CD4-positive, alpha-beta T cell (primary cell): ENCODE measurements at regions of chr19 and their contacts with region 1.

Region 1: GRCh38 chr19:10251792-10252694 is at the start of gene MRPL4:
- DNase-seq: peak; percentile 87 to 99 (median 94)
- ATAC-seq: peak; percentile 97
- H3K4me3 ChIP-seq: peak within 1 kb of the TSS; percentile 86
- H3K4me3 Mint-ChIP-seq: peak within 1 kb of the TSS; percentile 100
- H3K27ac ChIP-seq: peak within 1 kb of the TSS; percentile 52 to 73
- H3K27ac Mint-ChIP-seq: peak within 1 kb of the TSS; percentile 98
- H3K4me1 ChIP-seq: peaks cover 27% of the 10 kb centered on the region
- H3K4me1 Mint-ChIP-seq: peaks cover 21% of the 10 kb centered on the region
- H3K27me3 ChIP-seq: no peaks in the 10 kb centered on the region
- H3K27me3 Mint-ChIP-seq: no peaks in the 10 kb centered on the region
- CTCF ChIP-seq: no peak
- total RNA-seq, gene MRPL4: 44.6 to 47.3 TPM

Region 2: DNA sequence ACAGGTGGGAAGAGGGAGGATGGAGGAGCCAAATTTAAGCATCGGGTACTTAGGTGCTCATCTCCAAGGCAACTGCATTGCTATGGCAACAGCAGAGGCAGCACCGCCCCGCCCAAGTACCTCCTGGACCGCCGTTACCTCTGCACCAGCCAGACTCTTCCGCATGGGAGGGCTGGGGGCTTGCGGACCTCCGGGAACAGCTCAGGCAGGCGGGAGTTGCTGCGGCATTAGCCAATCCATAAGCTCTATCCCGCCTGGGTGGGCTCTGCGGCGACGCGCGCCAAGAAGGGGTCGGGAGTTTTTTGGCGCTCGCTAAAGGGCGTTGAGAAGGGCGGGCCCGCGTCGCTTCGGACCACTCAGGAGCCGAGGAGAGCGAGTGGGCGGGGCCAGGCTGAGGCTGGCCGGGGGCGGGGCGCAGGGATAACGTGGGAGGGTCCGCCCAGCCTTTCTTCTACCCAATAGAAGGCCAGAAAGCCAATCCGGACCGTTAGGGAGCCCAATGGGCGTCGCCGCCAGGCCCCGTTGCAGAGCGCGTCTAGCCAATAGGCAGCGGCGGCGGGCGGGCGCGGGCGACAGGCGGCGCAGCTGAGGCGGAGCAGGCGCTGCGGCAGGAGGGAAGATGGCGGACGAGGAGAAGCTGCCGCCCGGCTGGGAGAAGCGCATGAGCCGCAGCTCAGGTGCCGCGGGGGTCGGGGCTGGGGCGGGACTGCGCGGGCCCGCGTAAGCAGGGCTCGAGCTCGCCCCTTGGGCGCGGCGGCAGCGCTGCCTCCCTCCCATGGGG is 417.1 kb before region 1 on chr19 and contains the start of gene PIN1:
- CTCF ChIA-PET with region 1: no interaction called
- POLR2A ChIA-PET with region 1: no interaction called
- intact Hi-C with region 1: loop called in 1 of 2 experiments (anchors 10 kb)
- DNase-seq: peak; percentile 98 to 100 (median 99)
- ATAC-seq: peak; percentile 94
- H3K4me3 ChIP-seq: peak within 1 kb of the TSS; percentile 81
- H3K4me3 Mint-ChIP-seq: peak within 1 kb of the TSS; percentile 96
- H3K27ac ChIP-seq: peak within 1 kb of the TSS; percentile 40 to 76
- H3K27ac Mint-ChIP-seq: peak within 1 kb of the TSS; percentile 94
- H3K4me1 ChIP-seq: peaks cover 33% of the 10 kb centered on the region
- H3K4me1 Mint-ChIP-seq: peaks cover 23% of the 10 kb centered on the region
- H3K27me3 ChIP-seq: no peaks in the 10 kb centered on the region
- H3K27me3 Mint-ChIP-seq: no peaks in the 10 kb centered on the region
- CTCF ChIP-seq: peak; percentile 43
- total RNA-seq, gene PIN1: 33.2 to 35.3 TPM

Region 3: GRCh38 chr19:10074153-10074552 is 177.9 kb before region 1 on chr19:
- CTCF ChIA-PET with region 1: no interaction called
- POLR2A ChIA-PET with region 1: no interaction called
- intact Hi-C with region 1: loop called in 1 of 2 experiments (anchors 2 kb)
- DNase-seq: peak in 10 of 14 experiments; percentile 13 to 77 (median 43)
- ATAC-seq: peak; percentile 71
- H3K4me3 ChIP-seq: no peak overlapping the region
- H3K4me3 Mint-ChIP-seq: no peak overlapping the region
- H3K27ac ChIP-seq: no peak overlapping the region
- H3K27ac Mint-ChIP-seq: no peak overlapping the region
- H3K4me1 ChIP-seq: no peaks in the 10 kb centered on the region
- H3K4me1 Mint-ChIP-seq: no peaks in the 10 kb centered on the region
- H3K27me3 ChIP-seq: no peaks in the 10 kb centered on the region
- H3K27me3 Mint-ChIP-seq: no peaks in the 10 kb centered on the region
- CTCF ChIP-seq: peak; percentile 44

Region 4: GRCh38 chr19:10106100-10106936 is 145.7 kb before region 1 on chr19 and contains the start of gene PPAN:
- CTCF ChIA-PET with region 1: interaction called, 3 read pairs
- POLR2A ChIA-PET with region 1: interaction called, 3 read pairs
- intact Hi-C with region 1: loop called in 1 of 2 experiments (anchors 5 kb)
- DNase-seq: peak; percentile 94 to 100 (median 98)
- ATAC-seq: peak; percentile 59
- H3K4me3 ChIP-seq: peak within 1 kb of the TSS; percentile 73
- H3K4me3 Mint-ChIP-seq: peak within 1 kb of the TSS; percentile 93
- H3K27ac ChIP-seq: peak within 1 kb of the TSS; percentile 94 to 98
- H3K27ac Mint-ChIP-seq: peak within 1 kb of the TSS; percentile 95
- H3K4me1 ChIP-seq: peaks cover 86% of the 10 kb centered on the region
- H3K4me1 Mint-ChIP-seq: peaks cover 58% of the 10 kb centered on the region
- H3K27me3 ChIP-seq: no peaks in the 10 kb centered on the region
- H3K27me3 Mint-ChIP-seq: no peaks in the 10 kb centered on the region
- CTCF ChIP-seq: no peak
- total RNA-seq, gene PPAN: 119 to 127 TPM

Region 5: GRCh38 chr19:10194500-10195289 is 57.3 kb before region 1 on chr19 and contains the start of gene DNMT1:
- CTCF ChIA-PET with region 1: interaction called, 7 read pairs
- POLR2A ChIA-PET with region 1: interaction called, 7 read pairs
- intact Hi-C with region 1: loop called in 1 of 2 experiments (anchors 2 kb)
- DNase-seq: peak; percentile 86 to 98 (median 96)
- ATAC-seq: peak; percentile 93
- H3K4me3 ChIP-seq: peak within 1 kb of the TSS; percentile 99
- H3K4me3 Mint-ChIP-seq: peak within 1 kb of the TSS; percentile 98
- H3K27ac ChIP-seq: peak within 1 kb of the TSS; percentile 77 to 80
- H3K27ac Mint-ChIP-seq: peak within 1 kb of the TSS; percentile 88
- H3K4me1 ChIP-seq: peaks cover 49% of the 10 kb centered on the region
- H3K4me1 Mint-ChIP-seq: peaks cover 32% of the 10 kb centered on the region
- H3K27me3 ChIP-seq: no peaks in the 10 kb centered on the region
- H3K27me3 Mint-ChIP-seq: no peaks in the 10 kb centered on the region
- CTCF ChIP-seq: no peak
- total RNA-seq, gene DNMT1: 159 to 160 TPM

Region 6: DNA sequence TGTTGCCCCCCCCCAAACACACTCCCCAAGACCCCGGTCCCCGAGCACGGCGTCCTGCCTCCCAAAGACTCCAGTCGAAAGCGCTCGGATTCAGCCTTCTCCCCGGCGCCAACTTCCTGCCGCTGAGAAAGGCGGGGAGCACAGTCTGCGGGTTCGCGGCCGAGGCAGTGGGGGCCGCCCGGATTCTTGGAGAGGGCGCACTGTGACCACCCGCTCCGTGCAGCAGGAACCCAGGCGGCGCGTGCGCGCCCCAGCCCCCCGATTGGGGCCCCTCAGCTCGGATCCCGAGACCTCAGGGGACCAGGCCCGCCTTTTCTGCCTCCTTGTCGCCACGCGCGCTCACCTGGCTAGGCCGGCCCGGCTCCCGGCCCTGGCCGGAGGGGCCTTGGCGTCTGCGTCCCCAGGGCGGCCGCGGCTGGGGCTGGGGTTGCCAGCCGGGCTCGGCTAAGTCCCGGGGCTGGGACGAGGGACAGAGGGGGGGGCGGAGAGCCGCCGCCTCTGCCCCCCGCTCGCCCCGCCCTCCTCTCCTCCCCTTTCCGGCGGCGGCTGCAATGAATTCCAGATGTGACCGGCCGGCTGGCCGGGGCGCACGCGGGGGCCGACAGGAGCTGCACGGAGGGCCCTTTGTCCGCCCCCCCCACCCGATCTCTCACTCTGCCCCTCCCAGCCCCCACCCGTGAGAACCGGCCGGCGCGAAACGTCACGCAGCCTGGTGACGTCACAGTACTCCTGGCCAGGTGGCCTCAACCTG is 21.0 kb before region 1 on chr19 and contains the start of gene S1PR2:
- CTCF ChIA-PET with region 1: interaction called, 38 read pairs
- POLR2A ChIA-PET with region 1: interaction called, 8 read pairs
- intact Hi-C with region 1: loop called (anchors 1 kb)
- DNase-seq: peak; percentile 37 to 91 (median 68)
- ATAC-seq: peak; percentile 59
- H3K4me3 ChIP-seq: peak within 1 kb of the TSS; percentile 96
- H3K4me3 Mint-ChIP-seq: peak within 1 kb of the TSS; percentile 92
- H3K27ac ChIP-seq: peak within 1 kb of the TSS; percentile 86 to 90
- H3K27ac Mint-ChIP-seq: peak within 1 kb of the TSS; percentile 92
- H3K4me1 ChIP-seq: peaks cover 57% of the 10 kb centered on the region
- H3K4me1 Mint-ChIP-seq: peaks cover 29% of the 10 kb centered on the region
- H3K27me3 ChIP-seq: no peaks in the 10 kb centered on the region
- H3K27me3 Mint-ChIP-seq: no peaks in the 10 kb centered on the region
- CTCF ChIP-seq: no peak
- total RNA-seq, gene S1PR2: 14.6 to 17.2 TPM